HEK293 (cell line): ENCODE measurements at regions of chr2 and their contacts with region 1.

Region 1: GRCh38 chr2:30089171-30089570 is 57.6 kb upstream of the YPEL5 start:
- H3K4me3 ChIP-seq: no peak overlapping the region
- H3K27ac ChIP-seq: no peak overlapping the region
- H3K4me1 ChIP-seq: no peaks in the 10 kb centered on the region
- CTCF ChIP-seq: no peak

Region 2: GRCh38 chr2:30106543-30106942 is 17.4 kb after region 1 on chr2:
- CTCF ChIA-PET with region 1: interaction called, 10 read pairs
- POLR2A ChIA-PET with region 1: no interaction called
- H3K4me3 ChIP-seq: no peak overlapping the region
- H3K27ac ChIP-seq: no peak overlapping the region
- H3K4me1 ChIP-seq: no peaks in the 10 kb centered on the region
- CTCF ChIP-seq: no peak

Region 3: GRCh38 chr2:30127016-30127893 is 38.1 kb after region 1 on chr2:
- CTCF ChIA-PET with region 1: no interaction called
- POLR2A ChIA-PET with region 1: no interaction called
- H3K4me3 ChIP-seq: no peak overlapping the region
- H3K27ac ChIP-seq: no peak overlapping the region
- H3K4me1 ChIP-seq: no peaks in the 10 kb centered on the region
- CTCF ChIP-seq: no peak